Activated naive CD4-positive, alpha-beta T cell treated with anti-CD3 and anti-CD28 coated beads for 36 hours (primary cell): ENCODE measurements at regions of chr3 and their contacts with region 1.

Region 1: GRCh38 chr3:198080521-198081280 is 120.7 kb downstream of the LMLN start:
- DNase-seq: peak; percentile 81
- H3K4me3 Mint-ChIP-seq: peak overlapping the region; percentile 88
- H3K27ac Mint-ChIP-seq: peak overlapping the region; percentile 86
- H3K4me1 Mint-ChIP-seq: peaks cover 19% of the 10 kb centered on the region
- H3K27me3 Mint-ChIP-seq: peaks cover 37% of the 10 kb centered on the region

Region 2: GRCh38 chr3:197761784-197762183 is 318.9 kb before region 1 on chr3:
- CTCF ChIA-PET with region 1: no interaction called
- intact Hi-C with region 1: no loop called
- DNase-seq: no peak
- H3K4me3 Mint-ChIP-seq: no peak overlapping the region
- H3K27ac Mint-ChIP-seq: no peak overlapping the region
- H3K4me1 Mint-ChIP-seq: no peaks in the 10 kb centered on the region
- H3K27me3 Mint-ChIP-seq: no peaks in the 10 kb centered on the region

Region 3: DNA sequence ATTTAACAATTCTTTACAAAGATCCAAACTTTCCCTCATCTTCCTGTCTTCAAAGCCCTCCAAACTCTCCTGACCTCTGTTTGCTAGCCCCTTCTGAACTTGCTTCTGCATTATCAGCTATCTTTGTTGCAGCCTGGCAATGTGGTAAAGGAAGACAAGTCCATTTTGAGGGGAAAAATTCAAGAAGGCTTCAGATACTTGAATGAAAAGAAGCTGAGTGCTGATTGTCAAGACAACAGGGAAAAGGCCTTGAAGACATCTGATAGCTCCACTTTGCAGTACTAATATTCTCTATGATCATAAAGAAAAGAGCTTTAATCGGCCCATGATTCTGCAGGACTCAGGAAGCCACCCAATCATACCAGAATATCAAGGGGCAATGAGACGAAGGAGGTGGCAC is 28.9 kb before region 1 on chr3:
- CTCF ChIA-PET with region 1: interaction called, 6 read pairs
- intact Hi-C with region 1: loop called (anchors 2 kb)
- DNase-seq: no peak
- H3K4me3 Mint-ChIP-seq: no peak overlapping the region
- H3K27ac Mint-ChIP-seq: no peak overlapping the region
- H3K4me1 Mint-ChIP-seq: no peaks in the 10 kb centered on the region
- H3K27me3 Mint-ChIP-seq: peaks cover 2% of the 10 kb centered on the region

Region 4: DNA sequence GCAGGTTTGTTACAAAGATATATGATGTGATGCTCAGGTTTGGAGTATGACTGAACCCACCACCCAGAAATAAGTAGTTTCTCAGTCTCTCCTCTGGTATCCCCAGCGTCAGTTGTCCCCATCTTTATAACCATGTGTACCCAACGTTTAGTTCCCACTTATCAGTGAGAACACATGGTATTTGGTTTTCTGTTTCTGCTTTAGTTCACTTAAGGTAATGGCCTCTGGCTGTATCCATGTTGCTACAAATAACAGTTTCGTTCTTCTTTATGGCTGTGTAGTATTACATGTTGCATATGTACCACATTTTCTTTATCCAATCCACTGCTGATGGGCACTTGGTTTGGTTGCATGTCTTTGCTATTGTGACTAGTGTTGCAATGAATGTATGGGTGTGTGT is 11.6 kb after region 1 on chr3:
- CTCF ChIA-PET with region 1: interaction called, 13 read pairs
- intact Hi-C with region 1: no loop called
- DNase-seq: no peak
- H3K4me3 Mint-ChIP-seq: no peak overlapping the region
- H3K27ac Mint-ChIP-seq: no peak overlapping the region
- H3K4me1 Mint-ChIP-seq: peaks cover 6% of the 10 kb centered on the region
- H3K27me3 Mint-ChIP-seq: peaks cover 19% of the 10 kb centered on the region